ENCODE measurements at regions of chr1 and their contacts with region 1.

Region 1: GRCh38 chr1:56584910-56585528 is 5.7 kb upstream of the PLPP3 start:
- DNase-seq: no peak
- ATAC-seq: peak; percentile 83
- H3K4me3 ChIP-seq: no peak overlapping the region
- H3K27ac ChIP-seq: no peak overlapping the region
- H3K4me1 ChIP-seq: 0 out of 2 replicates have a peak, but pooled peaks cover 2% of the 10 kb centered on the region
- H3K27me3 ChIP-seq: no peaks in the 10 kb centered on the region
- CTCF ChIP-seq: peak; percentile 78; the same call in 1 of the 2 replicates

Region 2: GRCh38 chr1:55284852-55285251 is 1300.2 kb before region 1 on chr1:
- CTCF ChIA-PET with region 1: interaction called, 8 read pairs
- POLR2A ChIA-PET with region 1: no interaction called
- in situ Hi-C with region 1: no loop called
- intact Hi-C with region 1: loop called (anchors 2 kb)
- DNase-seq: peak; percentile 39
- ATAC-seq: peak; percentile 89
- H3K4me3 ChIP-seq: no peak overlapping the region
- H3K27ac ChIP-seq: peak overlapping the region; percentile 55; the same call in 1 of the 2 replicates
- H3K4me1 ChIP-seq: peaks cover 3% of the 10 kb centered on the region
- H3K27me3 ChIP-seq: no peaks in the 10 kb centered on the region
- CTCF ChIP-seq: peak; percentile 77

Region 3: GRCh38 chr1:56709269-56709880 is 124.4 kb after region 1 on chr1:
- CTCF ChIA-PET with region 1: interaction called, 3 read pairs
- POLR2A ChIA-PET with region 1: no interaction called
- in situ Hi-C with region 1: no loop called
- intact Hi-C with region 1: loop called (anchors 5 kb)
- DNase-seq: peak; percentile 57
- ATAC-seq: peak; percentile 78
- H3K4me3 ChIP-seq: no peak overlapping the region
- H3K27ac ChIP-seq: no peak overlapping the region
- H3K4me1 ChIP-seq: peaks cover 7% of the 10 kb centered on the region
- H3K27me3 ChIP-seq: no peaks in the 10 kb centered on the region
- CTCF ChIP-seq: peak; percentile 59; the same call in 1 of the 2 replicates

Measured in Panc1 (cell line).